ENCODE measurements at regions of chr2 and their contacts with region 1.

Region 1: GRCh38 chr2:42169100-42169873 is at the start of gene EML4:
- DNase-seq: peak; percentile 95
- ATAC-seq: peak; percentile 81
- H3K4me3 Mint-ChIP-seq: no peak within 1 kb of the TSS
- H3K27ac Mint-ChIP-seq: peak within 1 kb of the TSS; percentile 86
- H3K4me1 Mint-ChIP-seq: peaks cover 21% of the 10 kb centered on the region
- H3K27me3 Mint-ChIP-seq: no peaks in the 10 kb centered on the region
- total RNA-seq, gene EML4: 72.1 to 74.1 TPM

Region 2: DNA sequence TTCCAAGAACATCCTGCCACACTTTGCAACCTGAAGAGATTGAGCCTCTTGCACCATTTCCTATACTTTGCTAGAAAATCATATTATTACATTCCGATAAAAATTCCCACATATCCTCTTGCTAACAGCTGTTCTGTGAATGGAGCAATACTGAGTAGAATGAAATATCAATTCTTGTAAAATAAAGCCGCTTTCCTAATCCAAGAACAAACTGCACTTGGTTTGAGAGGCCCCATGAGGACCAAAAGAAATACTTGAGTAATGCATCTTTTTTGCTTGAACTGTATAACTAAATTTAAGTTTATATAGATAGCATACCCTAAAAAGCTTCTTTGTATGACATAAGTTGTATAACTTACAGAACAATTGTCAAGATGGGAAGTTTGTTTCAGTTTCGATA is 1085.0 kb before region 1 on chr2:
- CTCF ChIA-PET with region 1: no interaction called
- POLR2A ChIA-PET with region 1: no interaction called
- intact Hi-C with region 1: no loop called
- DNase-seq: no peak
- ATAC-seq: no peak
- H3K4me3 Mint-ChIP-seq: no peak overlapping the region
- H3K27ac Mint-ChIP-seq: no peak overlapping the region
- H3K4me1 Mint-ChIP-seq: no peaks in the 10 kb centered on the region
- H3K27me3 Mint-ChIP-seq: no peaks in the 10 kb centered on the region

Region 3: DNA sequence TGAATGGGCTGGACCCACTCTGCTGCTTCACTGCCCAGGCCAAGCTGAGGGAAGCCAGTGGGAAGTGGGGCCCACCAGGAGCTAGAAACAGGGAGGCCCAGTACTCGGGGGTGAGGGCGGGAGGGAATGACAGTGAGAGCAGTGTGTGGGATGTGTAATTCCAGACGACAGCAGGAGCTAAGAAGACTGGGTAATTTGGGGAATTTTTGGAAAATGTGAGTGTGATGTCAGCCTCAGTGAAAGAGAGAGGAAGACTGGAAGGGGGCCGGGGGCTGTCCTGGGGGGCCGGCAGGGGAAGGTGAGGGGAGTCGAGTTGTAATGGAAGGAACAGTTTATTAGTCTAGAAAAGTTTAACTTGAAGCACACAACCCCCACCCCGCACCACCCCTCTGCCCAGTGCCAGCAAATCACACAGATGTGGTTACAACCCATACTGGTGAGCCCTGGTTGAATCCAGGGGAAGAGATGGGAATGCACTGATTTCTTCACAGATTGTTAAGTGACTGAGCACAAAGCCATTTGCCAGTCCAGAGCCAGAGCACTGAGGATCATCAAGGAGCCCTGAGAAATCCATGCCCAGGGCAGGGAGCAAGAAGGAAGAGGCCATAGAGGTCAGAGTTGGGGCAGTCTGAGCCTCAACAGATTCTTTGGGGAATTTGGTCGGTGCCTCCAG is 198.2 kb before region 1 on chr2:
- CTCF ChIA-PET with region 1: no interaction called
- POLR2A ChIA-PET with region 1: no interaction called
- intact Hi-C with region 1: no loop called
- DNase-seq: no peak
- ATAC-seq: no peak
- H3K4me3 Mint-ChIP-seq: no peak overlapping the region
- H3K27ac Mint-ChIP-seq: no peak overlapping the region
- H3K4me1 Mint-ChIP-seq: no peaks in the 10 kb centered on the region
- H3K27me3 Mint-ChIP-seq: peaks cover 2% of the 10 kb centered on the region

Region 4: GRCh38 chr2:42095923-42096408 is 73.3 kb before region 1 on chr2:
- CTCF ChIA-PET with region 1: interaction called, 6 read pairs
- POLR2A ChIA-PET with region 1: interaction called, 3 read pairs
- intact Hi-C with region 1: loop called in 1 of 2 experiments (anchors 2 kb)
- DNase-seq: peak; percentile 86
- ATAC-seq: peak; percentile 64
- H3K4me3 Mint-ChIP-seq: no peak overlapping the region
- H3K27ac Mint-ChIP-seq: no peak overlapping the region
- H3K4me1 Mint-ChIP-seq: peaks cover 32% of the 10 kb centered on the region
- H3K27me3 Mint-ChIP-seq: no peaks in the 10 kb centered on the region

Region 5: GRCh38 chr2:42132966-42133641 is 36.2 kb before region 1 on chr2:
- CTCF ChIA-PET with region 1: interaction called, 4 read pairs
- POLR2A ChIA-PET with region 1: interaction called, 9 read pairs
- intact Hi-C with region 1: loop called (anchors 1 to 2 kb)
- DNase-seq: peak; percentile 92
- ATAC-seq: peak; percentile 90
- H3K4me3 Mint-ChIP-seq: peak overlapping the region; percentile 62
- H3K27ac Mint-ChIP-seq: peak overlapping the region; percentile 92
- H3K4me1 Mint-ChIP-seq: peaks cover 82% of the 10 kb centered on the region
- H3K27me3 Mint-ChIP-seq: no peaks in the 10 kb centered on the region

Region 6: DNA sequence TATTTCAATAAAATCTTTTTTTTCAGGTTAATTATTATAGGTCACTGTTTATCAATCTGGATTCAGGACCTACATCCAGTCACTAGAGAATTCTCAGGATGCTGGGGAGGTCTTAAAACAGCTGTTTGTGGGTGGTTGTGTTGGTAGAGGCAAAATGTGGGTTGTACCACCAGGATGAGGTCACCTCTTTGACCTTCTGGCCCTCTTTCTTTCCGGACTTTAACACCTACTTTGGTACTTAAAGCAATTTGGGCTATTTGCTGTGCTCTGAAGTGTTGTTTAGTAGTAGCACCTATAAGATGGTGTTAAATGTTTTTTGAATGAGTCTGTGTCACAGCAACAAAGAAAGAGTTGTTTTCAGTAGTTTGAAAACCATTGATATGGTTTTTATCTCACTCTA is 14.5 kb after region 1 on chr2:
- CTCF ChIA-PET with region 1: interaction called, 21 read pairs
- POLR2A ChIA-PET with region 1: interaction called, 4 read pairs
- intact Hi-C with region 1: loop called in 1 of 2 experiments (anchors 1 kb)
- DNase-seq: no peak
- ATAC-seq: no peak
- H3K4me3 Mint-ChIP-seq: no peak overlapping the region
- H3K27ac Mint-ChIP-seq: no peak overlapping the region
- H3K4me1 Mint-ChIP-seq: peaks cover 69% of the 10 kb centered on the region
- H3K27me3 Mint-ChIP-seq: no peaks in the 10 kb centered on the region

Region 7: DNA sequence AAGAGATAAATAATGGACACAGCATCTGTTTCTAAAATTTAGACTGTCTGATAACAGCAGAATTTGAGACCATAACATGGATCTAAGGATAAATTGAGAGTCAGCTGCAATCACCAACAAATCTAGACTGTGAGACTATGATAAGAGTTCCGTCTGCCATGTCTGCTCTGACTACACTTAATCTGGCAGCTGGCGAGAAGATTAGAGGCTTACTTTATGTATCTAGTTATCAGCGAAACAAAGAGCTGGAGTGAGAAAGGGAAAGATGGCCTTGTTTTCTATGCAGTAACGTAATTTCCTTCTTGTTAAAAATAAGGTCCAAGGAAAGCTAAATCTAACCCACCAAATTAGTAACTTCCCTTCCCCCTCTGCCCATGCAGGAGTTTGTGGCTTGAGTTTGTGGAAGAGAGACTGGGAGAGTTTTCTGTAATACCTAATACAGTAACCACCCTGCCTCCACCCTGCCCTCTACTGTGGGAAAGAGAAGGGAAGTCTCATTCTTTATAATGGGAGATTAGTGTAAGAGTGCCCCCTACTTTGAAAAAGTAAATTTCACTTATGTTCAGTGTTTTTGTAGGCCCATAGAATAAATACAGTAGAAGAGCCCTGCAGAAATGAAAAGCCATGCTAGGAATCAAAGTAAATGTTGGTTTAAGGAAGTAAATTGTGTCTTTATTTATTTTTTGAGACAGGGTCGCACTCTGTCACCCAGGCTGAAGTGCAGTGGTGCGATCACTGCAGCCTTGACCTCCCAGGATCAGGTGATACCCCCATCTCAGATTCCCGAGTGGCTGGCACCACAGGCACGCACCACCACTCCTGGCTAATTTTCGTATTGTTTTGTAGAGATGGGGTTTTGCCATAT is 27.3 kb after region 1 on chr2:
- CTCF ChIA-PET with region 1: interaction called, 3 read pairs
- POLR2A ChIA-PET with region 1: no interaction called
- intact Hi-C with region 1: loop called (anchors 2 kb)
- DNase-seq: peak; percentile 53
- ATAC-seq: peak; percentile 51
- H3K4me3 Mint-ChIP-seq: no peak overlapping the region
- H3K27ac Mint-ChIP-seq: peak overlapping the region; percentile 5
- H3K4me1 Mint-ChIP-seq: peaks cover 80% of the 10 kb centered on the region
- H3K27me3 Mint-ChIP-seq: no peaks in the 10 kb centered on the region

Region 8: GRCh38 chr2:42360890-42361727 is 191.8 kb after region 1 on chr2 and contains the start of gene COX7A2L:
- CTCF ChIA-PET with region 1: no interaction called
- POLR2A ChIA-PET with region 1: no interaction called
- intact Hi-C with region 1: loop called (anchors 1 kb)
- DNase-seq: peak; percentile 98
- ATAC-seq: peak; percentile 94
- H3K4me3 Mint-ChIP-seq: peak within 1 kb of the TSS; percentile 89
- H3K27ac Mint-ChIP-seq: peak within 1 kb of the TSS; percentile 94
- H3K4me1 Mint-ChIP-seq: peaks cover 40% of the 10 kb centered on the region
- H3K27me3 Mint-ChIP-seq: no peaks in the 10 kb centered on the region
- total RNA-seq, gene COX7A2L: 103 TPM